ENCODE measurements at regions of chr16 and their contacts with region 1.

Region 1: DNA sequence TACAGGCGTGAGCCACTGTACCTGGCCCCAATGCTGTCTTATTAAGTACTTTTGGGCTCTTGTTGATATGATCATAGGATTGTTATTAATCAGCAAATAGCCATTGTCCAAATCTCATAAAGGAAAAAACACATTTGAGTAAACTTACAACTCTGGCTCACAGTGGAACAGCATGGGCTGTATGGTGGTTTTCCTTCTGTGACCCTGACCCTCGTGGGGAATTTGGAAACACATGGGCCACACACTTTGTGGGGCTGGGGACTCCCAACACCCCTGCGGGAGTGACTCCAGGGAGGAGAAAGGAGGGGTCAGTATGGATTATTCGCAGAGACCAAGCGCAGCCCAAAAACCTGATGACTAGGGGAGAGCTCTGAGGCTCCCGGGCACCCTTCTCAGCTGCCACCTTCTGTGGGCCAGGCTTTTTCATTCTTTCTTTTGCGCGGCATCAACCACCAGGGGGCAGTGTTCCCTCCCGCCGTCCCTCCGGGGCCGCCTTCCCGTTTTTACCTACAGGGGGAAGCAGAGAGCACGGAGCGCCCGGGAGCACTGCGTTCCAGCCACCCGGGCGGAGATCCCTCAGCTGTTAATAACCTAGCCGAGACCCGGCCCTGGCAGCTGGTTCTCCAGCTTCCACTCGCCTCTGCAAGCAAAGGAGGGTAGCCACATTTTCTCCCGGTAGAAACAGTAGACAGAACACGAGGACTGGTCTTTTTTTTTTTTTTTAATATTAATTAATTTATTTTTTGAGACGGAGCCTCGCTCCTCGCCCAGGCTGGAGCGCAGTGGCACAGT is 9.7 kb downstream of the TSNAXIP1 start:
- DNase-seq: peak; percentile 80
- H3K27ac ChIP-seq: 0 out of 2 replicates have a peak overlapping the region, but pooled peaks have one; percentile 4
- CTCF ChIP-seq: peak; percentile 99

Region 2: GRCh38 chr16:67531212-67531611 is 285.2 kb before region 1 on chr16:
- CTCF ChIA-PET with region 1: no interaction called
- POLR2A ChIA-PET with region 1: no interaction called
- DNase-seq: no peak
- H3K27ac ChIP-seq: peak overlapping the region; percentile 84
- CTCF ChIP-seq: no peak

Region 3: DNA sequence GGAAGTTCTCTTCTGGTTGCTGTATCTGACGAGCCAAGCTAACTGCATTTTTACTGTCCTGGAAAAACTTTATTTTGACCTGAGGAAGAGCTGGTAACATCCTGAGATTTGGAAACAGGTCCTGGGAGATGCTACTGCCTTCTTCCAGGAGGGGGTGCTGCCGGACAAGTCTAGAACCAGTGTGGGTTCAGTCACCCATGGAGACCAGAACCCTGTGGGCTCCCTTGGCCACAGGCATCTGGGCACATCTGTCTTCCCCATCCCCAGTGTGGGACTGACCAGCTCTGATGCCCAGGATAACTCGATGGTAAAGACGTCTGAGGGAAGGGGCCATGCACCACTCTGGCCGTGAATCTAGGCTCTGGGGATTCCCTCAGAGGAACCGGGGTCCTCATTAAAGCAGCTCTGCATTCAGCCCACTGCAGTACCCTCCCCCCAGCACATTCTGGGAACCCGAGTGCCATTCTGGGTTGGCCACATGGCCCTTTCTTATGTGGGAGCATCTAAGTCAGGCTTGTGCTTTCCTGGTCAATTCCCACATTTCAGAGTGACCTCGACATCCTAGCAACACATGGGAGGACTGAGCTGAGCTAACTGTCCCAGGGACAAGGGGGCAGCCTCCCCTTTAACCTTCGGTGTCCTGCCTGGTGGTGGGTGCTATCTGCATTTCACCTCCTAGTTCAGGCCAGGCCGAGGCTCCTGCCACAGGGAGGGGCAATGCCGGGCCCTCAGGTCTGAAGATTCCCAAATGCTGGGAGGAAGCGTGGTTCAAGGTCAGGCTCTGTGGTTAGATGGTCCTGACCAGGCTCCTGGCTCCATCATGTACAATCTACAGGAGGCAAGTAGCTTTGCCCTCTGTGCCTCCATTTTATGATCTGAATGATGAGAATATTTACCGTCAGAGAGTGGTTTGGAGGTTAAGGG is 143.4 kb before region 1 on chr16:
- CTCF ChIA-PET with region 1: interaction called, 17 read pairs
- POLR2A ChIA-PET with region 1: no interaction called
- DNase-seq: peak; percentile 64
- H3K27ac ChIP-seq: peak overlapping the region; percentile 60
- CTCF ChIP-seq: peak; percentile 59

Region 4: GRCh38 chr16:67841764-67842508 is 25.5 kb after region 1 on chr16 and contains the start of gene THAP11:
- CTCF ChIA-PET with region 1: interaction called, 20 read pairs
- POLR2A ChIA-PET with region 1: no interaction called
- DNase-seq: peak; percentile 90
- H3K27ac ChIP-seq: peak within 1 kb of the TSS; percentile 97
- CTCF ChIP-seq: peak; percentile 88

Region 5: DNA sequence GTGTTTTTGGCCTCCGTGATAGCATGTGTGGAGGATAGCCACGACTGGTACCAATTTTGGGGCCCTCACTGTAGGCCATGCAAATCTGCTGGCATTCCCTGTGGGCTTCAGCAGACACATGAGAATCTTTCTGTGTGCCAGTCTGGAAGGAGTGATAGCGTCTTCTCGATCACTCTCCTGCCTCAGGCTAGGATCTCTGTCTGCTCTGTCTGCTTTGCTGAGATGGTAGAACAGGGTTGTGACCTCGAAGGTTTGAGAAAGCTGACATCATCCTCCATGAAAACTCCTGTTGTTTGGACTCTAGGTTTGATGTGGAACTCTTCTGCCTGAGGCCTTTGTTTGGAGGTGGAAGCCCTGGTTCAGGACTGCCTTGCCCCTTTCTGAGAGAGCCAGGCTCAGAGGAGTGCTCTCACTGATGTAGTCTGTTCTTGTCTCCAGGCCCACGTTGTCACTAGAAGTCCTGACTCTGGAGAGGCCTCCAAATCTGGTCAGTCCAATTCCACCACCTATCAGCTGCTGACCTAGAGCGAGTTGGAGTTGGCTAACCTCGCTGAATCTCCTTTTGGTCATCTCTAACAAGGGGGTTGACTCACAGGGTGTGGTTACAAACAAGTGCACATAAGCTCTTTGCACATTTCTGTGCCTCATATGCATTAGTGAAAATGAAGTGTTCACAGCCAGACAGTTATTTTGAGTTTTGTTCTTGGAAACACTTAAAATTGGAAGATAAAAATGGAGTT is 44.4 kb after region 1 on chr16:
- CTCF ChIA-PET with region 1: interaction called, 11 read pairs
- POLR2A ChIA-PET with region 1: no interaction called
- DNase-seq: peak; percentile 51
- H3K27ac ChIP-seq: peak overlapping the region; percentile 79
- CTCF ChIP-seq: no peak

Region 6: GRCh38 chr16:67883872-67884261 is 67.4 kb after region 1 on chr16:
- CTCF ChIA-PET with region 1: interaction called, 10 read pairs
- POLR2A ChIA-PET with region 1: no interaction called
- DNase-seq: peak; percentile 72
- H3K27ac ChIP-seq: peak overlapping the region; percentile 77
- CTCF ChIP-seq: peak; percentile 87

Region 7: GRCh38 chr16:67928561-67929364 is 112.3 kb after region 1 on chr16:
- CTCF ChIA-PET with region 1: interaction called, 19 read pairs
- POLR2A ChIA-PET with region 1: interaction called, 7 read pairs
- DNase-seq: peak; percentile 77
- H3K27ac ChIP-seq: peak overlapping the region; percentile 9; the same call in 1 of the 2 replicates
- CTCF ChIP-seq: peak; percentile 92